IMR-90 (cell line): ENCODE measurements at regions of chr1 and their contacts with region 1.

Region 1: GRCh38 chr1:90729504-90730242 is 12.6 kb upstream of the BARHL2 start:
- DNase-seq: no peak
- ATAC-seq: no peak
- H3K4me3 ChIP-seq: no peak overlapping the region
- H3K27ac ChIP-seq: no peak overlapping the region
- H3K4me1 ChIP-seq: 0 out of 2 replicates have a peak, but pooled peaks cover 1% of the 10 kb centered on the region
- H3K27me3 ChIP-seq: peaks cover 74% of the 10 kb centered on the region
- CTCF ChIP-seq: 0 out of 2 replicates have a peak, but pooled peaks have one; percentile 18
- POLR2A ChIP-seq: no peak
- RAD21 ChIP-seq: no peak

Region 2: GRCh38 chr1:90850898-90851710 is 121.4 kb after region 1 on chr1:
- CTCF ChIA-PET with region 1: no interaction called
- POLR2A ChIA-PET with region 1: no interaction called
- dilution Hi-C with region 1: no loop called
- in situ Hi-C with region 1: no loop called
- intact Hi-C with region 1: loop called (anchors 5 kb)
- DNase-seq: peak; percentile 55
- ATAC-seq: peak; percentile 100
- H3K4me3 ChIP-seq: peak overlapping the region; percentile 55
- H3K27ac ChIP-seq: no peak overlapping the region
- H3K4me1 ChIP-seq: no peaks in the 10 kb centered on the region
- H3K27me3 ChIP-seq: peaks cover 18% of the 10 kb centered on the region
- CTCF ChIP-seq: peak; percentile 55
- POLR2A ChIP-seq: no peak
- RAD21 ChIP-seq: peak; percentile 28